HepG2 (cell line): ENCODE measurements at regions of chr5 and their contacts with region 1.

Region 1: DNA sequence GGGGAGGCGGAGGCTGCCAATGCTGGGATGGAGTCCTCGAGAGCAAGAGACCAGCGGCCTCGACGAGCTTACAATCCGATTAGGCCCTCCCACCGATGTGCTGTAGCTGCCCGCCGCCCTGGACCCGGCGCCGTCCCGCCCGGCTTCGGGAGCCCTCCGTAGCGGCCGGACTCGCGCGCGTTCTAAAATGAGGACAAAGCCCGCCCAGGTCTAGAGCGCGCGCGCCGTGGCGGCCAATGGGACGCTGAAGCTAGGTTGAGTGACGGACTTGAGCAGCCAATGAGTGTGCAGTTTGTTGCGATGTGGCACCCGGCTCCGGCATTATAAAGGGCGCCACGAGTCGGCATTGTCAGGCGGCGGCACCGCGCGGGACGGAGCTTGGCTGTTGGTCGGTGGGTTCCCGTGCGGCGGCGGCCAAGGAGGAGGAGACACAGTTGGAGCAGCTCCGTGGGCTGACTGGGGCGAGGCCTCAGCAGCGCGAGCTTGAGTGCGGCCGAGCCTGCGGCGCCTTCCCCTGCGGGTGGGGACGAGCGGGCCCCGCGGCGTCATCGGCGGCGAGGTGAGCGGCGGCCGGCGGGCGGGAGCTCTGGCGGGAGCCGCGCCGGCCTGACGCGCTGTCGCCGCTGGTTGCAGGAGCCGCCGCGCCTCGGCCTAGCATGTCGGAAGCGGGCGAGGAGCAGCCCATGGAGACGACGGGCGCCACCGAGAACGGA is at the start of gene HNRNPAB:
- DNase-seq: peak; percentile 86
- ATAC-seq: peak; percentile 87
- H3K4me3 ChIP-seq: peak within 1 kb of the TSS; percentile 80 to 95 (median 90)
- H3K27ac ChIP-seq: peak within 1 kb of the TSS; percentile 73
- H3K4me1 ChIP-seq: peaks cover 39% of the 10 kb centered on the region
- H3K27me3 ChIP-seq: peaks cover 0 to 5% of the 10 kb centered on the region in 2 experiments; a peak in 1 of 5 replicates
- CTCF ChIP-seq: peak; percentile 19; the same call in 1 of the 2 replicates
- EP300 ChIP-seq: peak in 1 of 2 experiments; percentile 56; a peak in 1 of 4 replicates
- POLR2A ChIP-seq: peak in 1 of 2 experiments; percentile 100; a peak in 2 of 4 replicates
- RAD21 ChIP-seq: no peak
- total RNA-seq, gene HNRNPAB: 111 and 132 TPM in 2 replicates

Region 2: GRCh38 chr5:177537389-177538361 is 666.7 kb before region 1 on chr5:
- CTCF ChIA-PET with region 1: no interaction called
- POLR2A ChIA-PET with region 1: no interaction called
- in situ Hi-C with region 1: no loop called
- intact Hi-C with region 1: no loop called
- DNase-seq: no peak
- ATAC-seq: no peak
- H3K4me3 ChIP-seq: no peak overlapping the region
- H3K27ac ChIP-seq: no peak overlapping the region
- H3K4me1 ChIP-seq: no peaks in the 10 kb centered on the region
- H3K27me3 ChIP-seq: no peaks in the 10 kb centered on the region
- CTCF ChIP-seq: no peak
- EP300 ChIP-seq: no peak
- POLR2A ChIP-seq: no peak
- RAD21 ChIP-seq: no peak

Region 3: DNA sequence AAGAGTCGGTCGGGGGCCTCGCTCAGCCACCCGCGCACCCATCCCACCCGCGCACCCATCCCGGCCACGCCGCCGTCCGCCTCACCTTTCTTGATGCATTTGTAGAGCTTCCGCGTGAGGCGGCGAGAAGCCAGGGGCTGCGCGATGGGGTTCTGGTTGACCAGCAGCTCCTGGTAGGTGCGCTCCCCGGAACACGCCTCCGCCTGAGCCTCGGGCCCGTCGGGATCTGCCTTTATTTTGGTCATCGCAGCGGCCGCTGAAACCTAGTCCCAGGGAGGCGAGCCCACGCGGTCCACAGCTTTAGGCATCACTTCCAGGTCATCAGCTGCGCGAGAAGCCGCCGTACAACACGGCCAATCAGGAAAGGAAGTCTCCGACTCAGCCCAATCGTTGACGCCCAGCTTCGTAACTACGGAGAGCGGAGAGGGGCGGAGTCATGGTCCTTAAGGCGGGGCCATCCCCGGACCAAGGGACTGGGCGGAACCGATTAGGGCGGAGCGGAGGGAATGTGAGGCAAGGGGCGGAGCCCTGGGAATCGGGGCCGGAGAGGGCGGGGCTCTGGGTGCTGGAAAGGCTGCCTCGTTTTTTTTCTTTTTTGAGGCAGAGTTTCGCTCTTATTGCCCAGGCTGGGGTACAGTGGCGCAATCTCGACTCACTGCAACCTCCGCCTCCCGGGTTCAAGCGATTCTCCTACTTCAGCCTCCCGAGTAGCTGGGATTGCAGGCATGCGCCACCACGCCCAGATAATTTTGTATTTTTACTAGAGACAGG is 50.6 kb before region 1 on chr5 and contains the start of gene NHP2:
- CTCF ChIA-PET with region 1: no interaction called
- POLR2A ChIA-PET with region 1: interaction called, 14 read pairs
- in situ Hi-C with region 1: no loop called
- intact Hi-C with region 1: no loop called
- DNase-seq: peak; percentile 95
- ATAC-seq: peak; percentile 96
- H3K4me3 ChIP-seq: peak within 1 kb of the TSS; percentile 88 to 91 (median 89)
- H3K27ac ChIP-seq: peak within 1 kb of the TSS; percentile 52
- H3K4me1 ChIP-seq: peaks cover 34% of the 10 kb centered on the region
- H3K27me3 ChIP-seq: no peaks in the 10 kb centered on the region; a peak in 1 of 5 replicates
- CTCF ChIP-seq: no peak
- EP300 ChIP-seq: no peak
- POLR2A ChIP-seq: peak; percentile 54 to 64
- RAD21 ChIP-seq: 0 out of 2 replicates have a peak, but pooled peaks have one; percentile 15
- total RNA-seq, gene NHP2: 96.1 and 113 TPM in 2 replicates

Region 4: DNA sequence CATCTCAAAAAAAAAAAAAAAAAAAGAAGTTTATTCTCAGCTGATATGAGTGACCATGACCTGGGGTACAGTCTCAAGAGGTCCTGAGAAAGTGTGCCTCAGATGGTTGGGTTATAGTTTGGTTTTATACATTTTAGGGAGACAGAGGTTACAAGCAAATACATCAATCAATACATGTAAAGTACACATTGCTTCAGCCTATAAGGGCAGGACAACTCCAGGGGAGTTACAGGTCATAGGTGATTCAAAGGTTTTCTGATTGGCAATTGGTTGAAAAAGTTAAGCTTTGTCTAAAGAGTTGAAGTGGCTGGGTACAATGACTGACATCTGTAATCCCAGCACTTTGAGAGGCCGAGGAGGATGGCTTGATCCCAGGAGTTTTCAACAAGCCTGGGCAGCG is 14.9 kb before region 1 on chr5:
- CTCF ChIA-PET with region 1: no interaction called
- POLR2A ChIA-PET with region 1: interaction called, 13 read pairs
- in situ Hi-C with region 1: no loop called
- intact Hi-C with region 1: no loop called
- DNase-seq: no peak
- ATAC-seq: peak; percentile 56; the same call in 2 of the 3 replicates
- H3K4me3 ChIP-seq: no peak overlapping the region
- H3K27ac ChIP-seq: no peak overlapping the region
- H3K4me1 ChIP-seq: peaks cover 2% of the 10 kb centered on the region; the same call in 1 of the 2 replicates
- H3K27me3 ChIP-seq: peaks cover 0 to 13% of the 10 kb centered on the region in 2 experiments; a peak in 2 of 5 replicates
- CTCF ChIP-seq: no peak
- EP300 ChIP-seq: no peak
- POLR2A ChIP-seq: no peak
- RAD21 ChIP-seq: no peak

Region 5: DNA sequence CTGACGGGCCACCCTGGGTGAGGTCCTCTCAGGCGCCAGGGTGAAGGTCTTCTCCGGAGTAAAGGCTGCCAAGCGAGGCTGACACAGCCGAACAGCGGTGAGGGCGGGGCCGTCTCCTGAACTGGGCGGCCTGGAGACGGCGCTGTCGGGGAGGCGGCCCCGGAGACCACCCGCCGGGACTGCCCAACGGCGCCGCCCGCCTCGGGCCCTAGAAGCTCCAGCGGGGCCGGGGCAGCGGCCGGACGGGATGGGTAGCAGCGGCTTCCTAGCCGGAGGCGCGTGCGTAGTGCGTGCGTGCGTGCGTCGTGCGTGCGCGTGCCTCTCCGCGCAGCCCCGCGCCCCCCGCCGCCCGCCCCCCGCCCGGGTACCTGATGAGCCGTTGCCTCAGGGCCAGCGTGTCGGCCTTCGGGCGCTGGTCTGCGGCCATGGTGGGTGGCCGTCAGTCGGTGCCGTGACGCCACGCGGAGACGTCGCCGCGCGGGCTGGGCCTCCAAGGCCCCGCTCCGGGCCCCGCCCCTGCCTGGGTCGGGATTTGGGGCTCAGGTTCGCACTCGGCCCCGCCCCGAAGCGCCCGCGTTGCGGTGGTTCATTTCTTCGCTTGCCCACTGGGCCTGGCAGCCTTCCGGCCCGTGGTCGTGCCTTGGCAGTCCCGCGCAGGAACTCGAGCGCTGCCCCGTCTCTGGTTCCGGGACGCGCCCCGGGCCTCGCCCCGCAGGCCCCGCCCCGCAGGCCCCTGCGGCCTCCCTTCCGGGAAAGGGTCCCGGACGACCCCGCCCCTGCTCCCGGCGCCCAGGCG is 28.0 kb after region 1 on chr5 and contains the start of gene PHYKPL:
- CTCF ChIA-PET with region 1: no interaction called
- POLR2A ChIA-PET with region 1: interaction called, 12 read pairs
- in situ Hi-C with region 1: no loop called
- intact Hi-C with region 1: no loop called
- DNase-seq: peak; percentile 36
- ATAC-seq: peak; percentile 79
- H3K4me3 ChIP-seq: peak within 1 kb of the TSS; percentile 69 to 93 (median 87)
- H3K27ac ChIP-seq: peak within 1 kb of the TSS; percentile 67
- H3K4me1 ChIP-seq: peaks cover 61% of the 10 kb centered on the region
- H3K27me3 ChIP-seq: no peaks in the 10 kb centered on the region
- CTCF ChIP-seq: peak; percentile 18; the same call in 1 of the 2 replicates
- EP300 ChIP-seq: no peak
- POLR2A ChIP-seq: peak in 1 of 2 experiments; percentile 54; a peak in 1 of 4 replicates
- RAD21 ChIP-seq: no peak
- total RNA-seq, gene PHYKPL: 6.5 and 18.0 TPM in 2 replicates

Region 6: GRCh38 chr5:178297751-178298150 is 93.4 kb after region 1 on chr5:
- CTCF ChIA-PET with region 1: no interaction called
- POLR2A ChIA-PET with region 1: no interaction called
- in situ Hi-C with region 1: no loop called
- intact Hi-C with region 1: no loop called
- DNase-seq: no peak
- ATAC-seq: no peak
- H3K4me3 ChIP-seq: no peak overlapping the region
- H3K27ac ChIP-seq: no peak overlapping the region
- H3K4me1 ChIP-seq: no peaks in the 10 kb centered on the region
- H3K27me3 ChIP-seq: peaks cover 1 to 6% of the 10 kb centered on the region in 2 experiments; a peak in 2 of 5 replicates
- CTCF ChIP-seq: no peak
- EP300 ChIP-seq: no peak
- POLR2A ChIP-seq: no peak
- RAD21 ChIP-seq: no peak

Region 7: DNA sequence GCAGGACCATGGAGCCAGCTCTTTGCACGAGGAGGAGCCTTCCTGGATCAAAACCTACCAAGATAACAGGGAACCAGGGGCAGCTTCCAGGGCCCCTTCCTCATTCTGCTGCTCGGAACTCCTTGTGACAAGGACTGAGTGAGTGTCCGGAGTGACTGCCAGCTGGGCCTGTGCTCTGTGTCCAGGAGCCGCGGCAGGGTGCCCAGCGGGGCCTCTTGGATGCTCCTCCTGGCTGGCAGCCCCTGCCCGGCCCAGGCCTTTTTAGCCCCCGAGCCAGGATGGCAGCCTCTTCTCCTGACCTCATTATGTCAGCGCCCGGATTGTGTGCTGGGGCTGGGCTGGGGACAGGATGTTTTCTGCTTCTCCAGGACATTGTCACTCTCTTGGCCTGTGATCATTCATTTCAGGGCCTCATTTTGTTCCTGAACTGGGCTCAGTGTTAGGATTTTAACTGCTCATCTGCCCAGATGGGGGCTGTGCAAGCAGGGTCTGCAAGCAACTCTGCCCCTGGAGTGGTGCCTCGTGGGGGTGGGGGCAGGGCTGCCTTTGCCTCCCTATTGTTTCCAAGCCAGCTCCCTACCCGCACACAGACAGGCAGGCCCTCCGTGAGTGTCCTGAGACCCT is 224.1 kb after region 1 on chr5:
- CTCF ChIA-PET with region 1: no interaction called
- POLR2A ChIA-PET with region 1: no interaction called
- in situ Hi-C with region 1: no loop called
- intact Hi-C with region 1: no loop called
- DNase-seq: no peak
- ATAC-seq: no peak
- H3K4me3 ChIP-seq: no peak overlapping the region
- H3K27ac ChIP-seq: no peak overlapping the region
- H3K4me1 ChIP-seq: 0 out of 2 replicates have a peak, but pooled peaks cover 8% of the 10 kb centered on the region
- H3K27me3 ChIP-seq: peaks cover 0 to 16% of the 10 kb centered on the region in 2 experiments; a peak in 2 of 5 replicates
- CTCF ChIP-seq: no peak
- EP300 ChIP-seq: no peak
- POLR2A ChIP-seq: no peak
- RAD21 ChIP-seq: no peak